ENCODE measurements at regions of chr1 and their contacts with region 1.

Region 1: DNA sequence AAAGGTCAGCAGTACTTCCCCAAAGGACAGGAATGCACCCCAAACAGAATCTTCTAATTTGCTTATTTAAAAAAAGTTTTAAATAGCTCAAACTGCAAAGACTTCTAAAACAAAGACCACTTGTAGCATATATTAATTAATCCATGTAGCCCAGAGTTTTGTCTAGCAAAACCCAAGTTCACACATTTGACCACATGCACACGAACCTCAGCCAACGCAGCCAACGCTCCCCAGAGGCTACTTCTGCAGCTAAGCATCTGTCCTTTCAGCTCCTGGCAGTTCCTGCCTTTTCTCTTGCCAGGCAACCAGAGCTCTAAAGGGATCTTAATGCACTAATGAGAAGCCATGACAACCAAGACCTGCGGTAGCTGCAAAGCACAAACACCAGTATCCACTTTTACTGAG is 89.6 kb downstream of the RERE start:
- DNase-seq: peak; percentile 70
- H3K4me3 ChIP-seq: no peak overlapping the region
- H3K27ac ChIP-seq: peak overlapping the region in 1 of 2 experiments; percentile 56; a peak in 1 of 4 replicates
- H3K4me1 ChIP-seq: peaks cover 0 to 4% of the 10 kb centered on the region in 2 experiments; a peak in 2 of 4 replicates
- H3K27me3 ChIP-seq: no peaks in the 10 kb centered on the region
- CTCF ChIP-seq: no peak
- EP300 ChIP-seq: peak in 1 of 2 experiments; percentile 64; a peak in 1 of 4 replicates
- RAD21 ChIP-seq: peak; percentile 41; the same call in 1 of the 2 replicates

Region 2: GRCh38 chr1:8571200-8571984 is 156.4 kb before region 1 on chr1:
- CTCF ChIA-PET with region 1: interaction called, 21 read pairs
- POLR2A ChIA-PET with region 1: no interaction called
- DNase-seq: peak; percentile 43
- H3K4me3 ChIP-seq: no peak overlapping the region; a peak in 1 of 4 replicates
- H3K27ac ChIP-seq: peak overlapping the region; percentile 34 to 90; a peak in 3 of 4 replicates
- H3K4me1 ChIP-seq: peaks cover 18 to 21% of the 10 kb centered on the region in 2 experiments; a peak in 3 of 4 replicates
- H3K27me3 ChIP-seq: no peaks in the 10 kb centered on the region
- CTCF ChIP-seq: peak; percentile 68
- EP300 ChIP-seq: peak in 1 of 2 experiments; percentile 6; a peak in 1 of 4 replicates
- RAD21 ChIP-seq: peak; percentile 51

Region 3: GRCh38 chr1:8629241-8630091 is 98.3 kb before region 1 on chr1:
- CTCF ChIA-PET with region 1: no interaction called
- POLR2A ChIA-PET with region 1: no interaction called
- DNase-seq: no peak
- H3K4me3 ChIP-seq: no peak overlapping the region
- H3K27ac ChIP-seq: no peak overlapping the region
- H3K4me1 ChIP-seq: peaks cover 10 to 40% of the 10 kb centered on the region in 2 experiments; a peak in 3 of 4 replicates
- H3K27me3 ChIP-seq: no peaks in the 10 kb centered on the region
- CTCF ChIP-seq: no peak
- EP300 ChIP-seq: no peak
- RAD21 ChIP-seq: no peak

Region 4: GRCh38 chr1:8702850-8703810 is 24.7 kb before region 1 on chr1:
- CTCF ChIA-PET with region 1: interaction called, 29 read pairs
- POLR2A ChIA-PET with region 1: interaction called, 3 read pairs
- DNase-seq: peak; percentile 96
- H3K4me3 ChIP-seq: peak overlapping the region; percentile 51 to 64
- H3K27ac ChIP-seq: peak overlapping the region; percentile 73 to 93
- H3K4me1 ChIP-seq: peaks cover 30 to 48% of the 10 kb centered on the region in 2 experiments; a peak in 3 of 4 replicates
- H3K27me3 ChIP-seq: no peaks in the 10 kb centered on the region
- CTCF ChIP-seq: no peak
- EP300 ChIP-seq: peak; percentile 32 to 89; a peak in 3 of 4 replicates
- RAD21 ChIP-seq: no peak; the same call in 1 of the 2 replicates

Region 5: DNA sequence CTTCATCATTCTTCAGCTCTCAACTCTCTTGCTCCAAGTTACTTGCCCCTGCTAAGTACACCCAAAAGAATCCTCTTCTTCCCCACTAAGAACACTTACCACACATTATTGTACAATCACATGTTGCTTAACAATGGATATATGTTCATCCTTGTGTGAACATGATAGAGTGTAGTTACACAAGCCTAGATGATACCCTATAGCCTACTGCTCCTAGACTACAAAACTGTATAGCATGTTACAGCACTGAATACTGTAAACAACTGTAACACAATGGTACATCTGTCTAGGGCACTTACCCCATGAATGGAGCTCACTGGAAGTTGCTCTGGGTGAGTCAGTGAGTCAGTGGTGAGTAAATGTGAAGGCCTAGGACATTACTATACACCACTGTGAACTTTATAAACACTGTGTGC is 12.2 kb after region 1 on chr1:
- CTCF ChIA-PET with region 1: interaction called, 13 read pairs
- POLR2A ChIA-PET with region 1: no interaction called
- DNase-seq: no peak
- H3K4me3 ChIP-seq: no peak overlapping the region
- H3K27ac ChIP-seq: peak overlapping the region in 1 of 2 experiments; percentile 33; a peak in 1 of 4 replicates
- H3K4me1 ChIP-seq: peaks cover 2 to 5% of the 10 kb centered on the region in 2 experiments; a peak in 2 of 4 replicates
- H3K27me3 ChIP-seq: no peaks in the 10 kb centered on the region
- CTCF ChIP-seq: no peak
- EP300 ChIP-seq: no peak
- RAD21 ChIP-seq: no peak

Region 6: GRCh38 chr1:8817406-8818324 is 89.9 kb after region 1 on chr1 and contains the start of gene RERE:
- CTCF ChIA-PET with region 1: interaction called, 10 read pairs
- POLR2A ChIA-PET with region 1: interaction called, 4 read pairs
- DNase-seq: peak; percentile 100
- H3K4me3 ChIP-seq: peak within 1 kb of the TSS; percentile 82 to 90
- H3K27ac ChIP-seq: peak within 1 kb of the TSS; percentile 88 to 95
- H3K4me1 ChIP-seq: peaks cover 17 to 23% of the 10 kb centered on the region in 2 experiments; a peak in 3 of 4 replicates
- H3K27me3 ChIP-seq: no peaks in the 10 kb centered on the region
- CTCF ChIP-seq: no peak
- EP300 ChIP-seq: no peak
- RAD21 ChIP-seq: no peak
- polyA plus RNA-seq, gene RERE: 4.1 and 8.1 TPM in 2 replicates

Region 7: DNA sequence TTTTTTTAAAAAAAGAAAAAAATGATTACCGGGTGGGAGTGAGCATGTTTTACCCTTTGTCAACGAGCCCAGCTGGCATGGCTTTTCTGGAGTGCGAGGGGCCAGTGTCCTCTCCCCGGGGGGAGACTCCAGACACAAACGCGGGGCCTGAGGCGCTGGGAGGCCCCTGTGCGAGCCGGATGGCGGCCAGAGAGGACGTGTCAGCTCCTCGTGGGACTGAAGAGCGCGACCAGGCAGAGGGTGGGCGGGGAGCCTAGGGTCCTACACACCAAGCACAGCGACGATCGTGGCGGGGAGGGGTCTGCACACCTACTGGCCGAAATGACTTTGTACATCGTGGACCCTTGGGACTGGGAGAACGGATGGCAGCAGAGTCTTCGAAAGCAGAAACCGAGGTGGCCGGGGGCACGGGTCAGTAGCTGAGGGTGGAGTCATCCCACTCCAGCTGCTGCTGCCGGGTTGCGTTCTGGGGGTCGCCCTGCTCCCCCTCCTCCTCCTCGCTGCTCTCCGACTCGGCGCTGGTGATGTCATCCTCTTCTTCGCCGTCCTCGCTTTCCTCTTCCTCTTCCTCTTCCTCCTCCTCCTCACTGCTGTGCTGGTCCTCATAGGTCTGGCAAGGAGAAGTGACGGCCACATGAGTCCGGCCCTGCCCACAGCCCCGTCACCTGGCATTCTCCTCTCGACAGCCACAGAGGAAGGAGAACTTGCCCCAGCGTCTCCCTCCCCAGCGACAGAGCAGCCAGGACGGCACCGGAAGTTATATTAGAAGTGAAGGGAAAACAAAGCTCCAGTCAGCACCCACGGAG is 1002.5 kb after region 1 on chr1:
- CTCF ChIA-PET with region 1: no interaction called
- POLR2A ChIA-PET with region 1: no interaction called
- DNase-seq: no peak
- H3K4me3 ChIP-seq: no peak overlapping the region
- H3K27ac ChIP-seq: no peak overlapping the region
- H3K4me1 ChIP-seq: no peaks in the 10 kb centered on the region
- H3K27me3 ChIP-seq: no peaks in the 10 kb centered on the region
- CTCF ChIP-seq: no peak
- EP300 ChIP-seq: no peak
- RAD21 ChIP-seq: no peak